ENCODE measurements at regions of chr5 and their contacts with region 1.

Region 1: DNA sequence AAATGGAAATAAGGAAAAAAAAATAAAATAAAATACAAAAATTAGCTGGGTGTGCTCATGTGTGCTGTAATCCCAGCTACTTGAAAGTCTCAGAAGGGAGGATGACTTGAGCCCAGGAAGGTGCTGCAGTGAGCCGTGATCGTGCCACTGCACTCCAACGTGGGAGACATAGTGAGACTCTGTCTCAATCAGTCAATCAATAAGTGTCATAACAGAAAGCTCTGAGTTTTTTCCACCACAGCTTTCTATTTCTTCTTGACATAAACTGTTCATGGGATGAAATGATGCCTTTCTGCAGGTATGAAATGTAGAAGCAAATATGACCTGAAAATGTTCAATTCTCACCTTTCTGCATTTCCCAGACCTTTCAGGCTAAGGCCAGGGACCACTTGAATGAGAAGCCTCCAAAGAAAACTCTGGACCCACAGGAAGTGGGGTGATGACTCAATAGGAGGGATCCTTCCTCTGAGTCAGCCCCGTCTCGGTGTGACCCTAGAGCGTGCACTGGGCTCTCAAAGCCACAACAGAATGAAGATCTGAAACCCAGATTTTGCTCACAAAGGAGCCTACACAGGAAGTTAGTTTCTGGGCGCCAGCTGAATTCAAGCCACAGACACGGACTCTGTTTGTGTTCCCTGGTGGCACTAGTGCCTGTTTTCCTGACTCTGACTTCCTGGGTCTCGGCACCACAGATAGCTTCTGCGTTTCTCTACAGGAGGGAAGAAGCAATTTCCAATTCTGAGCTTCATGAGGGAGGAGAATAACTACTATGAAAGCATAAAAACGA is 62.0 kb downstream of the ANKH start:
- DNase-seq: peak; percentile 63
- H3K4me3 Mint-ChIP-seq: peak overlapping the region; percentile 62
- H3K27ac Mint-ChIP-seq: peak overlapping the region; percentile 87
- H3K4me1 Mint-ChIP-seq: peaks cover 38% of the 10 kb centered on the region
- H3K27me3 Mint-ChIP-seq: no peaks in the 10 kb centered on the region
- CTCF ChIP-seq: no peak

Region 2: GRCh38 chr5:14118527-14119320 is 690.8 kb before region 1 on chr5:
- CTCF ChIA-PET with region 1: no interaction called
- intact Hi-C with region 1: no loop called
- DNase-seq: no peak
- H3K4me3 Mint-ChIP-seq: no peak overlapping the region
- H3K27ac Mint-ChIP-seq: no peak overlapping the region
- H3K4me1 Mint-ChIP-seq: peaks cover 8% of the 10 kb centered on the region
- H3K27me3 Mint-ChIP-seq: no peaks in the 10 kb centered on the region
- CTCF ChIP-seq: no peak

Region 3: GRCh38 chr5:14871210-14872069 is 61.9 kb after region 1 on chr5 and contains the start of gene ANKH:
- CTCF ChIA-PET with region 1: no interaction called
- intact Hi-C with region 1: loop called (anchors 2 kb)
- DNase-seq: peak; percentile 88
- H3K4me3 Mint-ChIP-seq: peak within 1 kb of the TSS; percentile 70
- H3K27ac Mint-ChIP-seq: peak within 1 kb of the TSS; percentile 5
- H3K4me1 Mint-ChIP-seq: peaks cover 22% of the 10 kb centered on the region
- H3K27me3 Mint-ChIP-seq: no peaks in the 10 kb centered on the region
- CTCF ChIP-seq: no peak
- total RNA-seq, gene ANKH: 42.1 and 53.2 TPM in 2 replicates

Measured in Calu3 (cell line).